ENCODE measurements at regions of chr5 and their contacts with region 1.

Region 1: GRCh38 chr5:69369369-69370121 is at the starts of genes AK6, RAD17 and TAF9:
- DNase-seq: peak; percentile 90 to 96
- ATAC-seq: peak; percentile 91 to 98 (median 91)
- H3K4me3 ChIP-seq: peak within 1 kb of the TSS; percentile 97
- H3K4me3 Mint-ChIP-seq: peak within 1 kb of the TSS; percentile 93
- H3K27ac ChIP-seq: peak within 1 kb of the TSS; percentile 98
- H3K27ac Mint-ChIP-seq: peak within 1 kb of the TSS; percentile 95 to 96
- H3K4me1 ChIP-seq: peaks cover 20% of the 10 kb centered on the region
- H3K4me1 Mint-ChIP-seq: peaks cover 27% of the 10 kb centered on the region in 2 donors
- H3K27me3 ChIP-seq: no peaks in the 10 kb centered on the region
- H3K27me3 Mint-ChIP-seq: no peaks in the 10 kb centered on the region
- CTCF ChIP-seq: no peak
- total RNA-seq, gene AK6: 5.8 to 10.8 (median 9.7) TPM
- total RNA-seq, gene RAD17: 24.4 to 34.3 (median 24.6) TPM
- total RNA-seq, gene TAF9: 38.3 to 53.8 (median 46.6) TPM

Region 2: DNA sequence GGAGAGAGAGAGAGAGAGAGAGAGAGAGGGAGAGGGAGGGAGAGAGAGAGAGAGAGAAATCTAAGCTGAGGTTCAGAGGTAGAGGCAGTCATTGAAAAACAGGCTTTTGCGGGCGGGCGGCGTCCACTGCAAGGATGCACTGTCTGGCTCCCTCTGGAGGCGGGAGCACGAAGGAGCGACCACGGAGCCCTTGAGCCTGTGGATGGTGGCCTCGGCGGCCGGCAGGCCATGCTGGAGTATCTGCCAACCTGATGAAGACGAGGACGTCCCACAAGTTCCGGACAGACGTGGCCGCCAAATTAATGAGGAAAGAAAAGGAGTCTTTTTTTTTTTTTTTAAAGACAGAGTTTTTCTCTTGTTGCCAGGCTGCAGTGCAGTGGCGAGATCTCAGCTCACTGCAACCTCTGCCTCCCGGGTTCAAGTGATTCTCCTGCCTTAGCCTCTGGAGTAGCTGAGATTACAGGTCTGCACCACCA is 34.7 kb before region 1 on chr5:
- intact Hi-C with region 1: loop called (anchors 2 kb)
- DNase-seq: peak; percentile 48 to 86
- ATAC-seq: peak; percentile 73 to 81 (median 74)
- H3K4me3 ChIP-seq: no peak overlapping the region
- H3K4me3 Mint-ChIP-seq: peak overlapping the region; percentile 80
- H3K27ac ChIP-seq: no peak overlapping the region
- H3K27ac Mint-ChIP-seq: peak overlapping the region; percentile 53 to 62
- H3K4me1 ChIP-seq: peaks cover 12% of the 10 kb centered on the region
- H3K4me1 Mint-ChIP-seq: peaks cover 10 to 19% of the 10 kb centered on the region in 2 donors
- H3K27me3 ChIP-seq: no peaks in the 10 kb centered on the region
- H3K27me3 Mint-ChIP-seq: no peaks in the 10 kb centered on the region
- CTCF ChIP-seq: peak; percentile 42